ENCODE measurements at regions of chr7 and their contacts with region 1.

Region 1: GRCh38 chr7:159143780-159144757 is 598 bp downstream of the VIPR2 start:
- DNase-seq: peak; percentile 68
- H3K4me3 Mint-ChIP-seq: peak overlapping the region; percentile 73
- H3K27ac Mint-ChIP-seq: no peak overlapping the region
- H3K4me1 Mint-ChIP-seq: peaks cover 3% of the 10 kb centered on the region
- H3K27me3 Mint-ChIP-seq: peaks cover 30% of the 10 kb centered on the region

Region 2: GRCh38 chr7:159007364-159007995 is 136.6 kb before region 1 on chr7:
- intact Hi-C with region 1: loop called (anchors 10 kb)
- DNase-seq: no peak
- H3K4me3 Mint-ChIP-seq: no peak overlapping the region
- H3K27ac Mint-ChIP-seq: peak overlapping the region; percentile 17
- H3K4me1 Mint-ChIP-seq: peaks cover 19% of the 10 kb centered on the region
- H3K27me3 Mint-ChIP-seq: no peaks in the 10 kb centered on the region

Region 3: DNA sequence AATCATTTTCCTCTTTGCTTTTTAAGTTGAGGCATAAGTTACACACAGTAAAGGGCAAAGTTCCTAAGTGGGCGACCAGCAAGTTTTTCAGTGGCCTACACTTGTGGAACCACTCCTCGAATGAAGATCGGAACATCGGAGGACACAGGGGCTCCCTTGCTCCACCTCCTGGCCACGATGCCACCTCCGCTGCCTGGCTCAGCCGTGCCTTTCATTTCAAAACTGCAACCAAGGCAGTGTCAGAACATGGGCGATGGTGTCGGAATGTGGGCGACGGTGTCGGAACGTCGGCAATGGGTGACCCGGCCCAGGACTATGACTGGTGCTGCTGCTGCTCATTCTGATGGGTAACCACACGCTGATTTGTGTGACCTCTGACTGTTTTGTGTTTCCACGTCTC is 10.2 kb after region 1 on chr7:
- intact Hi-C with region 1: no loop called
- DNase-seq: no peak
- H3K4me3 Mint-ChIP-seq: no peak overlapping the region
- H3K27ac Mint-ChIP-seq: no peak overlapping the region
- H3K4me1 Mint-ChIP-seq: no peaks in the 10 kb centered on the region
- H3K27me3 Mint-ChIP-seq: peaks cover 1% of the 10 kb centered on the region

Region 4: DNA sequence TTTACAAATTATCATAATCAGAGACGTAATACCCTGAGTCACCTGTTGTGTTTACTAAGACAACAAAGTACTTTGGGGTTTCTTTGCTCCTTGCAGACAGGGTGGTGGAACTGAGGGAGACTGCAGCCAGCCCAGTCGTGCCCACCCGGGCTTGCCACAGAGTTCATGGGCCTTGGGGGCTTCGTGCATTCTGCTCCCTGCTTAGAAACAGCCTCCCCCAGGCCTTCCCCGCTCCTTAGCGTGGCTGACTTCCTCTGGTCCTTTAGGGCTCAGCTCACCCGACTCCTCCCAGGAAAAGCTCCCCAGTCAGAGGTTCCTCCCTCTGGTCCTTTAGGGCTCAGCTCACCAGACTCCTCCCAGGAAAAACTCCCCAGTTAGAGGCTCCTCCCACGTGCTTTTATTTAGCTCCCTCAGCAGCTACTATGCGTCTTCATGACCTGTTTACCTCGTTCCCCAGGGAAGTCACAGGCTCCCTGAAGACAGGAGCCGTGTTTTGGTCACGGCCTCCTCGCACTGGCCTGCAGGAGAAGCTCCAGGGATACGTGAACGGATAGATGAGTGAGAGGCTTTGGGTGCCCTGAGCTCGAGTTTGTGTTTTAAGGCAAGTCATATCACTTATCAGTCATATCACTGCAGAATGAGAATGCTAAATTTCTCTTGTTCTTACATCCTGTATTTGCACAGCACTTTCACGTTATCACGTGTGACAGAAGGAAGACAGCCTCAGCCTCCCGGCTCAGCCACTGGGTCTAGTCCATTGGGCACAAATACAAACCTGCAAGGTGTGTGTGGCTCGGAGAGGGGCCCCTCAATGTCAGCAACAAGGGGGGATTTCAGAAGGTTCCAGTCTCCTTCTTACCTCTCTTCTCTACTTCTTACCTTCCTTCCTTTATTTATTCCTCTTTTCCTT is 53.3 kb after region 1 on chr7:
- intact Hi-C with region 1: loop called (anchors 2 kb)
- DNase-seq: peak; percentile 85
- H3K4me3 Mint-ChIP-seq: peak overlapping the region; percentile 79
- H3K27ac Mint-ChIP-seq: peak overlapping the region; percentile 97
- H3K4me1 Mint-ChIP-seq: peaks cover 23% of the 10 kb centered on the region
- H3K27me3 Mint-ChIP-seq: no peaks in the 10 kb centered on the region